Transverse colon (tissue), 4 donors: ENCODE measurements at regions of chr7 and their contacts with region 1.

Region 1: DNA sequence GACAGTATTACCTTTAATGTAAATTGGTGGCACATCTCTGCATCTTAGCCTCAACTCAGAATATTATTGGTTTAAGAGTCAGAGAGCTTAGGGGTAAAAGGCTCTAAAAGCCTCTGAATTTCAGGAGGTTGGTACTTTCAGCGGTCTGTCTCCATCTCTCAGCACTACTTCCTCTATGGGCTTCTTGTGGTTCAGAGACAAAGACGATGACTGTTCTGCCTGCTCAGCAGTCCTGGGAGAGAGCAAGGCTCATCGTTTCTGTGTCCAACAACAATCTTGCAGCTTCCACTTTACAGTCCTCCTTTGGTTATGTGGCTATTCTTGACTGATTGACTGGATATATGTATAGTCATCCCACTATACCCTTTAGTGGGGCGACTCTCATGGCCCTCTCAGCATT is 394.7 kb downstream of the AUTS2 start:
- DNase-seq: no peak
- H3K4me3 ChIP-seq: no peak overlapping the region
- H3K27ac ChIP-seq: no peak overlapping the region
- H3K4me1 ChIP-seq: no peaks in the 10 kb centered on the region
- H3K27me3 ChIP-seq: no peaks in the 10 kb centered on the region
- CTCF ChIP-seq: no peak
- EP300 ChIP-seq: no peak
- POLR2A ChIP-seq: no peak

Region 2: GRCh38 chr7:69893906-69894305 is 99.0 kb before region 1 on chr7:
- in situ Hi-C with region 1: loop called in 1 of 4 experiments (anchors 25 kb)
- intact Hi-C with region 1: no loop called
- DNase-seq: no peak
- H3K4me3 ChIP-seq: no peak overlapping the region
- H3K27ac ChIP-seq: no peak overlapping the region
- H3K4me1 ChIP-seq: no peaks in the 10 kb centered on the region
- H3K27me3 ChIP-seq: peaks cover 3% of the 10 kb centered on the region
- CTCF ChIP-seq: no peak
- EP300 ChIP-seq: no peak
- POLR2A ChIP-seq: no peak